ENCODE measurements at regions of chr19 and their contacts with region 1.

Region 1: DNA sequence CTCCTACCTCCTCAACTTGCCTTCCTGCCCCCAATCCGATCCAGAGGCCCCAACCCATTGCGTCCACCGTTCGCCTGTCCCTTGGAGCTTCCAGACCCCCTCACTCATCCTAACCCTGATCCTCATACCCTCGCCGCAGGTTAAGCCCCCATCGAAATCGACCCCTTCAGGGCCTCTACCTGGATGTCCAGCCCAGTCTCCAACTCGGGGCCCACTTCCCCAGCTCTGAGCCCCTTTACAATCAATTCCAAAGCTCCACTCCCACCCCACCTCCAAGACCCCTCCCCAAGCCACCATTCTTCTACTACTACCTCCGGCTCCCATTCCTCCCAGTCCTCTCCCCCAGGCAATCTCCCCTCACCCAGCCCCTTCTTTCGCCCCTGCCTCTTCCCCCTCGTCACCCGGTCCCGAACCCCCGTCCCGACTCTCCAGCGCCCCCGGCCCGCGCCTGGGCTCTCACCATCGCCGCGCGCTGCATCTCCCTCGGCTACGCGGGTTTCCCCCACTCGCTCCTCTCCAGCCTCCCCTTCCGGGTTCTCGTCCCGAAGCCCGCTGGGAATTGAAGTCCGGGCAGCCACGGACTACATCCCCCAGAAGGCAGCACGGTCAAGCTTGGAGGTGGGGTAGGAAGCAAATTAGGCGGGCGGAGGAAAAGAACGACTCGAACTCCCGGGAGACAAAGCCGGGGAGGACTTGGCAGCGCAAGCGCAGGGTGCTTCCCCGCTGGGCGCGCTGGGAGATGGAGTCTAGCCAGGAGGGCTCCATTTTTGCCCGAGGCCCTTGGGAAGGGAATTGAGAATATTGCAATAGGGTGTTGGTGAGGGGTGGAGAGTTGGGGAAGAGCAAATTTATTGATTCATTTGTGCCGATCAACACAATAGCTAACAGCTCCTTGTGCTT is at the start of gene FBXO46:
- DNase-seq: peak; percentile 86
- ATAC-seq: peak; percentile 98
- H3K4me3 Mint-ChIP-seq: peak within 1 kb of the TSS; percentile 100
- H3K27ac Mint-ChIP-seq: peak within 1 kb of the TSS; percentile 95
- H3K4me1 Mint-ChIP-seq: peaks cover 21% of the 10 kb centered on the region
- H3K27me3 Mint-ChIP-seq: peaks cover 9% of the 10 kb centered on the region
- total RNA-seq, gene FBXO46: 29.9 to 35.5 TPM

Region 2: DNA sequence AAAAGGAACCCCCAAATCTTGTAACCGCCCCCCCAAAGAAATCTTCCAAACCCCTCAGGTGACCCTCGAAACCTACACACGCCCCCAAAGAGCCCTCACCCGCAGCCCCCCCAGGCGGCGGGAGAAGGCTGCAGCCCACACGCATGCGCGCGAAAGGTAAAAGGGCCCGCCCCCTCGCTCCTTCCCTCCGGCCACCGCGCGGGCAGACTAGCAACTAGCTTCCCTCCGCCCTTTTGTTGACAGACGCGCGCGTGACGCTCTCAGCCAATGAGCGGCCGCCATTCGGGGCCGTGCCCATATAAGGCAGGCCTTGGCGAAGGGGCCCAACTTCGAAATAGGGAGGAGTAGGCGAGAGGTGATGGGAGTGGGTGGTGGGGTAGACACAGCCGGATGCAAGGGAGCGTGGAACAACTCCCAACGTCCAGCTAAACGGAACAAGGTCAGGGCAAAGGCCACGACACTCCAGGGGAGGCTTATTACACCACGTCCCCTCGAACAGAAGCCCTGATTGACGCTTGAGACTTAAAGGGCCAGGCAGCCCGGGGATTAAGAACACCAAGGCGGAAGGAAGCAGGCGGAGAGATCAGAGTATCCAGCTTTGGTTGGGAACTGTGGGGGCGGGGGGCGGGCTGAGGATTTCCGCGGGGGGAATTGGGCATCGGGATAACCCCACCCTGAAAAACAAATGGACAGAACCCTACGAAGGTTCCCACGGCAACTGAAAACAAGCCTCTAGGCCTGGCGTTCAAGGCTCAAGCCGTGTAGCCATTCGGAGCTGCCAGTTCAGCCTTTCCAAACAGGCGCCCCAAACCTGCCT is 13.3 kb before region 1 on chr19:
- POLR2A ChIA-PET with region 1: interaction called, 47 read pairs
- DNase-seq: peak; percentile 96
- ATAC-seq: peak; percentile 99
- H3K4me3 Mint-ChIP-seq: peak overlapping the region; percentile 95
- H3K27ac Mint-ChIP-seq: peak overlapping the region; percentile 89
- H3K4me1 Mint-ChIP-seq: peaks cover 23% of the 10 kb centered on the region
- H3K27me3 Mint-ChIP-seq: no peaks in the 10 kb centered on the region